ENCODE measurements at regions of chr7 and their contacts with region 1.

Region 1: DNA sequence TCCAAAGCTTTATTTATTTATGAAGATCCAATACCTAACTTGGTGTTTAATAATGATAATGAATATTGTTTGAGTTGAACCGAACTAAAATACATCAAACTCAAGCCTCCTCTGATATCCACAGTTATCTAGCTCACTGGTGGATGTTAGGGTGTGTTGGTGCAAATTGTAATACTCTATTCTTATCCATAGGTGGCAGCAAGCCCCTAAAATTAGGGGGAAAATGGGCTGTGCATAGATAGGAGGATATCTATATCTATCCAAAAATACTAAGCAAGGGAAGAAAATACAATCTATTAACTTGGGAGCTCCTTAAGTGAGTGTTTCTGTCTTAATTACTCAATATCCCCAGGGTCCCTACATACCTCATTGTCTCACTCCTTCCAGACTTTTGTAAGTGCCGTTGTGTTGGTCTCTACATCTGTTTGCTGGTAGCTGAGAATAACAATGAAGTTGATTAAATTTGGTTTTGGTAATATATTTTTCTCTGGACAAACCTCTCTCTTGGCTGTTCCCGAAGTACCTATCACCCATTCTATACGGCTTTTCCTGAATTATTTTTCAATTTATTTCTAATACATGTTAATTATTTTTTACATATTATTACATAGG is 55.0 kb upstream of the VWDE start:
- DNase-seq: peak; percentile 25
- ATAC-seq: peak; percentile 96
- H3K4me3 ChIP-seq: no peak overlapping the region
- H3K27ac ChIP-seq: no peak overlapping the region
- H3K4me1 ChIP-seq: no peaks in the 10 kb centered on the region
- H3K27me3 ChIP-seq: no peaks in the 10 kb centered on the region
- CTCF ChIP-seq: peak; percentile 76
- POLR2A ChIP-seq: no peak
- RAD21 ChIP-seq: peak; percentile 73

Region 2: GRCh38 chr7:12475362-12476063 is 16.9 kb after region 1 on chr7:
- CTCF ChIA-PET with region 1: interaction called, 12 read pairs
- POLR2A ChIA-PET with region 1: no interaction called
- dilution Hi-C with region 1: no loop called
- in situ Hi-C with region 1: no loop called
- intact Hi-C with region 1: no loop called
- DNase-seq: peak; percentile 55
- ATAC-seq: peak; percentile 48
- H3K4me3 ChIP-seq: no peak overlapping the region
- H3K27ac ChIP-seq: no peak overlapping the region
- H3K4me1 ChIP-seq: no peaks in the 10 kb centered on the region
- H3K27me3 ChIP-seq: no peaks in the 10 kb centered on the region
- CTCF ChIP-seq: no peak
- POLR2A ChIP-seq: no peak
- RAD21 ChIP-seq: no peak